ENCODE measurements at regions of chr1 and their contacts with region 1.

Region 1: DNA sequence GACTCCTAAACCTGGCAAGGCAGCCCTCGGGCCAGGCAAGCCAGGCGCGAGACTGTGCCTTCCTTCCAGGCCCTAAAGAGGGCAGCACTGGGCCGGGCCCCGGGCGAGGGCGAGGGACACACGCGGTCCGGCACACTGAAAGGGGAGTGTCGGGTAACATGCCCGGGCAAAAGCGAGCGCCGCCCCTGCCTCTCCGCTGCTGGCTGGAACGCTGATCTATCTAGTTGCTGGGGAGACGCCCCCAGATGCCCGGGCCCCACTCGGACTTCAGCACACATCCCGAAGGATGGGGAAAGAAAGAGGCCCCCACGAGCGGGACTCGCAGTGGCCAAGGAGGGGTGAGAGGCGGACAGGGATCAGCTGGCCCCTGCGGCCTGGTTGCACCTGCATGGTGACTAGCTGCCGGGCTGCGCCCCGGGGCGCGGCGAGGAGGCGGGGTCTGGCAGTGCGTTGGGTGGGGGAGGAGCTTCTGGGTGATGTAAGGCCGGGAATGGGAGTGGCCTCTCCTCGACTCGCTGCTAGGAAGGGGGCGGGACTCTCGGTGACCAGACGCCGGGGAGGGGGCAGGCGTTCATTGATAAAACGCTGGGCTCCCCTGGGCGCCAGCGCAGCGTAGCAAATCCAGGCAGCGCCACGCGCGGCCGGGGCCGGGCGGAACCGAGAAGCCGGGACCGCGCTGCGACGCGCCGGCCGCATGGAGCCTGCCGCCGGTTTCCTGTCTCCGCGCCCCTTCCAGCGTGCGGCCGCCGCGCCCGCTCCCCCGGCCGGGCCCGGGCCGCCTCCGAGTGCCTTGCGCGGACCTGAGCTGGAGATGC is at the start of gene PLK3:
- DNase-seq: peak; percentile 94
- ATAC-seq: peak; percentile 88
- H3K4me3 Mint-ChIP-seq: peak within 1 kb of the TSS; percentile 97
- H3K27ac Mint-ChIP-seq: peak within 1 kb of the TSS; percentile 100
- H3K4me1 Mint-ChIP-seq: peaks cover 33% of the 10 kb centered on the region
- H3K27me3 Mint-ChIP-seq: no peaks in the 10 kb centered on the region
- CTCF ChIP-seq: peak; percentile 30
- total RNA-seq, gene PLK3: 63.0 and 82.0 TPM in 2 replicates

Region 2: GRCh38 chr1:43348809-43349583 is 1451.0 kb before region 1 on chr1:
- CTCF ChIA-PET with region 1: no interaction called
- POLR2A ChIA-PET with region 1: no interaction called
- intact Hi-C with region 1: loop called (anchors 5 kb)
- DNase-seq: peak; percentile 65
- ATAC-seq: peak; percentile 86
- H3K4me3 Mint-ChIP-seq: peak overlapping the region; percentile 85
- H3K27ac Mint-ChIP-seq: peak overlapping the region; percentile 88
- H3K4me1 Mint-ChIP-seq: peaks cover 11% of the 10 kb centered on the region
- H3K27me3 Mint-ChIP-seq: no peaks in the 10 kb centered on the region
- CTCF ChIP-seq: no peak

Region 3: GRCh38 chr1:44390277-44390676 is 409.7 kb before region 1 on chr1:
- CTCF ChIA-PET with region 1: no interaction called
- POLR2A ChIA-PET with region 1: no interaction called
- intact Hi-C with region 1: no loop called
- DNase-seq: no peak
- ATAC-seq: no peak
- H3K4me3 Mint-ChIP-seq: no peak overlapping the region
- H3K27ac Mint-ChIP-seq: no peak overlapping the region
- H3K4me1 Mint-ChIP-seq: no peaks in the 10 kb centered on the region
- H3K27me3 Mint-ChIP-seq: peaks cover 12% of the 10 kb centered on the region
- CTCF ChIP-seq: no peak

Region 4: GRCh38 chr1:44786138-44786840 is 13.7 kb before region 1 on chr1:
- CTCF ChIA-PET with region 1: interaction called, 3 read pairs
- POLR2A ChIA-PET with region 1: interaction called, 35 read pairs
- intact Hi-C with region 1: loop called (anchors 1 kb)
- DNase-seq: peak; percentile 81
- ATAC-seq: peak; percentile 79
- H3K4me3 Mint-ChIP-seq: peak overlapping the region; percentile 75
- H3K27ac Mint-ChIP-seq: peak overlapping the region; percentile 86
- H3K4me1 Mint-ChIP-seq: peaks cover 32% of the 10 kb centered on the region
- H3K27me3 Mint-ChIP-seq: no peaks in the 10 kb centered on the region
- CTCF ChIP-seq: peak; percentile 100

Region 5: DNA sequence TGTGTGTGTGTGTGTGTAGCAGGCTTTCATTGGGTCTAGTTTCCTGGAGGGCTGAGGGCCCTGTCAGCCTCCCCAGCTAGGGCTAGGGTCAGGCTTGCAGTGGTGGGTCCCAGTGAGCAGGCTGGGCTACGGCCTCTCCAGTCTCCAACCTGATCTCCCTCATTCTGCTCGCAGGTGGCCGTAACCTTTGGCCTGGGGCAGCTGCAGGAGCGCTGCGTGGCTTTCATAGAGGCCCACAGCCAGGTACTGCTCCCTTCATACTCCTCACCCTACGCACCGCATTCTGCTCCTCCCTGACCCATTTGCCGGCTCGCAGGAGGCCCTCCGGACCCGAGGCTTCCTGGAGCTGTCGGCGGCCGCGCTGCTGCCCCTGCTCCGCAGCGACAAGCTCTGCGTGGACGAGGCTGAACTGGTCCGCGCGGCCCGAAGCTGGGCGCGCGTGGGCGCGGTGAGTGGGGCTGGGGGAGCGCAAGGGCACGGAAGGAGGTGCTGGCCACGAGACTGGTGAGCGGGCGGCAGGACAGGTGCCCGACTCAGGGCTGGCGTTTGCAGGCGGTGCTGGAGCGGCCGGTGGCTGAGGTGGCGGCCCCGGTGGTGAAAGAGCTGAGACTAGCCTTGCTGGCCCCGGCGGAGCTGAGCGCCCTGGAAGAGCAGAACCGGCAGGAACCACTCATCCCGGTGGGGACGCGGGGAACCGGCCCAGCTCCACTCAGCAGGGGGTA is 13.0 kb after region 1 on chr1:
- CTCF ChIA-PET with region 1: interaction called, 25 read pairs
- POLR2A ChIA-PET with region 1: interaction called, 364 read pairs
- intact Hi-C with region 1: loop called (anchors 1 kb)
- DNase-seq: no peak
- ATAC-seq: no peak
- H3K4me3 Mint-ChIP-seq: peak overlapping the region; percentile 11
- H3K27ac Mint-ChIP-seq: peak overlapping the region; percentile 50
- H3K4me1 Mint-ChIP-seq: peaks cover 63% of the 10 kb centered on the region
- H3K27me3 Mint-ChIP-seq: no peaks in the 10 kb centered on the region
- CTCF ChIP-seq: no peak

Region 6: DNA sequence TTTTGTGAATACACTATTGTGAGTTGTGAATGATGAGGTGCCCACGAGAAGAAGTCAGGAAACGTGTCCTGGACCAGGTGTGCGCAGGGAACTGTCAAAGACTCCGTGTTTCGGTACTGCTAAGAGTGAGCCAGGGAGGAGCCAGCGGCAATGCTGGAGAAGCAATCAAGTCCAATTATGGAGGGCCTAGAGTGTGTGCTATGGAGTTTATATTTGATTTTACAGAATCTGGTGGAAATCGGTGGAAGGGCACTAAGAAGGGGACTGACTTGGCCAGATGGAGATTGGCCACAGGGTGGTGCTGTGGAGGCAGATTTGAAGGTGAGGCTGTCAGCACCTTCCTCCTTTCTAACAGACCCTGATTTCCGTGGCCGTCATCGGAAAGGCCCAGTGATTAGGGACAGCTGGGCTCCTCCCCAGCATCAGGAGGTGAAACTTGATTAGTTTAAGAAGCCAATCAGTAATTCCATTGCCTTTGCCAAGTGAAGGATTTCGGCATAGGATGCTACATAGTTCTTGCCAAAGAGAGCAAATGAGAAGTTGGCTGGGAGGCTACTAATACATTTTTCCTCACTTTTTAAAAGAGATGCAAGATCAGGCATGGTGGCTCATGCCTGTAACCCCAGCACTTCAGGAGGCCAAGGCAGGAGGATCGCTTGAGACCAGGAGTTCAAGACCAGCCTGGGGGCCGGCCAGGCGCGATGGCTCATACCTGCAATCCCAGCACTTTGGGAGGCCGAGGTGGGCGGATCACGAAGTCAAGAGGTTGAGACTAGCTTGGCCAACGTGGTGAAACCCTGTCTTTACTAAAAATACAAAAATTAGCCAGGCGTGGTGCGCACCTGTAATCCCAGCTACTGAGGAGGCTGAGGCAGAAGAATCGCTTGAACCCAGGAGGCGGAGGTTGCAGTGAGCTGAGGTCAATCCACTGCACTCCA is 36.0 kb after region 1 on chr1:
- CTCF ChIA-PET with region 1: interaction called, 9 read pairs
- POLR2A ChIA-PET with region 1: interaction called, 10 read pairs
- intact Hi-C with region 1: loop called (anchors 1 kb)
- DNase-seq: peak; percentile 75
- ATAC-seq: peak; percentile 99
- H3K4me3 Mint-ChIP-seq: no peak overlapping the region
- H3K27ac Mint-ChIP-seq: peak overlapping the region; percentile 47
- H3K4me1 Mint-ChIP-seq: peaks cover 13% of the 10 kb centered on the region
- H3K27me3 Mint-ChIP-seq: no peaks in the 10 kb centered on the region
- CTCF ChIP-seq: peak; percentile 71

Region 7: DNA sequence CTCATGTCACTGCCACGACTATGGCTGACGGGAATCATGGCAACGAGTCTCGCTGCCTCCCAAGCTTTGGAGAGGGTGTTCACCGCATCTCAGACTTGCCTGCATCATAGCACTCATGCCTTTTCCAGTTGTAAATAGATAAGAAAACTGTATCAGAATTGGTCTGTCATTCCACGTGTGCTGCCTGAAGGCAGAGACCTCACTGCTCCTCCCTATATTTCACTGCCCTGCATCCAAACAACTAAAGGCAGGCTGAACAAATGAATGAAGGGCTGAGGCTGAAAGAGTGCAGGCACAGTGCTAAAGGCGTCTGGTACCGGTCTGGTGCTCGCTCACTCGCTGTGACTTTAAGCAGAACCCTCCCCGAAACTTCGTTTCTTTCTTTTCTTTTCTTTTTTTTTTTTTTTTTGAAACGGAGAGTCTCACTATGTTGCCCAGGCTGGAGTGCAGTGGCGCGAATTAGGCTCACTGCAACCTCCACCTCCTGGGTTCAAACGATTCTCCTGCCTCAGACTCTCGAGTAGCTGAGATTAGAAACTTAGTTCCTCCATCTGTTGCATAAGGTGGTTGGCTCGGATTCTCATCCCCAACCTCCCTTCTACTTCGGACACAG is 185.9 kb after region 1 on chr1:
- CTCF ChIA-PET with region 1: no interaction called
- POLR2A ChIA-PET with region 1: interaction called, 7 read pairs
- intact Hi-C with region 1: loop called (anchors 1 kb)
- DNase-seq: no peak
- ATAC-seq: no peak
- H3K4me3 Mint-ChIP-seq: peak overlapping the region; percentile 100
- H3K27ac Mint-ChIP-seq: peak overlapping the region; percentile 94
- H3K4me1 Mint-ChIP-seq: peaks cover 23% of the 10 kb centered on the region
- H3K27me3 Mint-ChIP-seq: no peaks in the 10 kb centered on the region
- CTCF ChIP-seq: no peak

Region 8: DNA sequence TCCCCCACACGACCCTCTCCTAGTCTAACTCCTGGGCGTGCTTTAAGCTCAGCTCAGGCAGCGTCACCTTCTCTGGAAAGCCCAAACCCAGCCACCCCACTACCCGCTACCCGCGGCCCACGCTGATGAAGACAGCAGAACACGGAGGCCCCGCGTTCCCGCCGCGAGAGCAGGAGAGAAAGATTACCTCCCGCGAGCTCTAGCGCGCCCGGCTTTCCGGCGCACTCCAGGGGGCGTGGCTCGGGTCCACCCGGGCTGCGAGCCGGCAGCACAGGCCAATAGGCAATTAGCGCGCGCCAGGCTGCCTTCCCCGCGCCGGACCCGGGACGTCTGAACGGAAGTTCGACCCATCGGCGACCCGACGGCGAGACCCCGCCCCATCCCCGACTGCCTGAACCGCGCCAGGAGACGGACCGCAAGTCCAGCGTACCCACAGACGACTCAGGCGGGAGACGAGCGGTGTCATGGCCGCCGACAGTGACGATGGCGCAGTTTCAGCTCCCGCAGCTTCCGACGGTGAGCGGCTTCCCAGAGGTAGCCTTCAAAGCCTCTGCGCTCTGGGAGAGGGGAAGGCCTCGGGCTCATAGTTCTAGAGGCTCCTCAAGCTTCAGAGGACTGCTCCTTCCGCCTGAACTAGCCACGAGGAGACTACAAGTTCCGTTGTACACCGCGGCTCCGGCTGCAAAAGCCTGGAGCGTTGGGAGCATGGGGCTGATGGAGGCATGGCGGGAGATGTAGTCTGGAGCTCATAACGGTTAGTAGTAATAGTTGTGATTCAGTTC is 540.0 kb after region 1 on chr1 and contains the starts of genes MUTYH and TOE1:
- CTCF ChIA-PET with region 1: no interaction called
- POLR2A ChIA-PET with region 1: interaction called, 13 read pairs
- intact Hi-C with region 1: loop called (anchors 1 kb)
- DNase-seq: peak; percentile 85
- ATAC-seq: peak; percentile 86
- H3K4me3 Mint-ChIP-seq: peak within 1 kb of the TSS; percentile 100
- H3K27ac Mint-ChIP-seq: peak within 1 kb of the TSS; percentile 99
- H3K4me1 Mint-ChIP-seq: peaks cover 39% of the 10 kb centered on the region
- H3K27me3 Mint-ChIP-seq: no peaks in the 10 kb centered on the region
- CTCF ChIP-seq: no peak
- total RNA-seq, gene MUTYH: 61.0 and 63.0 TPM in 2 replicates
- total RNA-seq, gene TOE1: 24.6 and 25.3 TPM in 2 replicates

Measured in activated B cell treated with CpG ODN at 0.5 μM for 24 hours (primary cell).